Right ventricle myocardium inferior (tissue), 1 donor: ENCODE measurements at regions of chr15 and their contacts with region 1.

Region 1: DNA sequence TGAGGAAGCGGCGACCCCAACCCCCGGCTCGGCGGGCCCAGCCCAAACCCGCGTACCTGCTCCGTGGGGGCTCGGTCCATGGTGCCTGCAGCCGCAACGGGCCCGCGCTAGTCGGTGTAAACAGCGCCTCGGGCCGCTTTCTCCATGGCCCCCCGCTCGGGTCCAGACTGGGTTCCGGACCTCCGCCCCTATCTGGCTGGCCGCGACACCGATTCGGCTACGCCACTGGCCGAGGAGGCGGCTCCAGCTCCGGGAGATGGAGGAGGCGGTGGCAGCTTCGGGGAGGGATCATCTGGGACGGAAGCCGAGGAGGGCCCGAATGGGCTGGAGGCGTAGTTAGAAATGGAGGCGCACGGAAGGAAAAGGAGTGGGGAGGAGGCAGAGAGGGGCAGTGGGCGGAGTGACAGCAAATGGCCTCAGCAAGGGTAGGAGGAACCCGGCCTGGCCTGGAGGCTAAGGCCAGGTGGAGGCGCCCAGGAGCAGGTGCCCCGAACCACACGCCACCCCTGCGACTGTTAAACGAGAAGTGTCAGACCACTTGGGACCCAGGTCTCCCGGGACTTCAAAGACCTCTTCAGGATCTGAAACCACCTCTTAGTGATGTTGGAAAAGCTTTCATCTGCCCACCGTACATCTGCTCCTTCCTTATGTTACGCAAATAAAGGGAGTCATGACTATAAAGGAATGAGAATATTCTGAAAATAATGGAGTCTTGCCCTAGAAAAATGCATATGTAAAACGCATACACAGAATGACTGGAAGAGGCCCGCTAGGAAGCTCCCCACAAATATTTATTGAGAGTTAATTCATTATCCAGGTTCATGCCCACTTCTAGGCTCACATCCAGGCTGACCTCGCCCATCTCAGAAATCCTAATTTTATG is at the start of gene SECISBP2L:
- DNase-seq: peak; percentile 95
- ATAC-seq: peak; percentile 99
- total RNA-seq, gene SECISBP2L: 34.2 TPM

Region 2: DNA sequence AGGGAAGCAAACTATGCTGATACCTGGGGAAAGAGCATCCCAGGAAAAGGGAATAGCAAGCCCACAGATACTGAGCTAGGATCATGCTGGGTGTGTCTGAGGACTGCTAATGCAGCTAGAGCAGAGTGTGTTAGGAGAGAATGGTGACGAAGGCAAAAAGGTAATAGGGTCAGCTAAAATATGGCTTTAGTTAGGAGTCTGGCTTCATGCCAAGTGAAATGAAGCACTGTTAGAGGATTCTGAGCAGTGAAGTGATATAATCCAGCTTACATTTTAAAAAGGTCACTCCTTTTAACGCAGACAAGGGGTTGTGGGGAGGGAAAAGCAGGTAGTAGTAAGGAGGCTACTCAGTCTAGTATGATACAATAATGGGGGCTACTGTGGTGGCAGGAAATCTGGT is 30.6 kb before region 1 on chr15:
- intact Hi-C with region 1: no loop called
- DNase-seq: no peak
- ATAC-seq: no peak

Region 3: DNA sequence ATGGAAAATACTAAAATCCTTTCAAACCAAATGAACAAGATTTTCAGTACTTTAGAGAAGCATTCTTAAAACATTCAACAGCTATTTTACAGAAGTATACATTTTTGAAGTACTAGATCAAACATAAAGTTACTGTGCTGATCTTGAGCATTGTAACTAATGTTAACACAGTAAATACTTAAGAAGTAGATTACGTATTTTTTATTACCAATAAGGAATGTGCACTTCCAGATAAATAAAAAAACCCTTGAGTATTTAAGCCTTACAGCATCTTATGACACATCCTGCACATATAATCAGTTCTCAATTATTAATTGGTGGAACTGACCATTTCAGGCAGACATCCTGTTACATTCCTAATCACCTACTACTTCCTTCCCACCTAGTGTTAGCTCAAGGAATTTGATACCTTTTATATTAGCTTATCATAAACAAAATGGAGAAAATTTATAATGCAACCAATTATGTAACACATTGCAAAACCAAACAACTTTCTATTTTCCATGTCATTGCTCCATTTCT is 76.1 kb after region 1 on chr15:
- intact Hi-C with region 1: loop called (anchors 5 kb)
- DNase-seq: no peak
- ATAC-seq: no peak

Region 4: DNA sequence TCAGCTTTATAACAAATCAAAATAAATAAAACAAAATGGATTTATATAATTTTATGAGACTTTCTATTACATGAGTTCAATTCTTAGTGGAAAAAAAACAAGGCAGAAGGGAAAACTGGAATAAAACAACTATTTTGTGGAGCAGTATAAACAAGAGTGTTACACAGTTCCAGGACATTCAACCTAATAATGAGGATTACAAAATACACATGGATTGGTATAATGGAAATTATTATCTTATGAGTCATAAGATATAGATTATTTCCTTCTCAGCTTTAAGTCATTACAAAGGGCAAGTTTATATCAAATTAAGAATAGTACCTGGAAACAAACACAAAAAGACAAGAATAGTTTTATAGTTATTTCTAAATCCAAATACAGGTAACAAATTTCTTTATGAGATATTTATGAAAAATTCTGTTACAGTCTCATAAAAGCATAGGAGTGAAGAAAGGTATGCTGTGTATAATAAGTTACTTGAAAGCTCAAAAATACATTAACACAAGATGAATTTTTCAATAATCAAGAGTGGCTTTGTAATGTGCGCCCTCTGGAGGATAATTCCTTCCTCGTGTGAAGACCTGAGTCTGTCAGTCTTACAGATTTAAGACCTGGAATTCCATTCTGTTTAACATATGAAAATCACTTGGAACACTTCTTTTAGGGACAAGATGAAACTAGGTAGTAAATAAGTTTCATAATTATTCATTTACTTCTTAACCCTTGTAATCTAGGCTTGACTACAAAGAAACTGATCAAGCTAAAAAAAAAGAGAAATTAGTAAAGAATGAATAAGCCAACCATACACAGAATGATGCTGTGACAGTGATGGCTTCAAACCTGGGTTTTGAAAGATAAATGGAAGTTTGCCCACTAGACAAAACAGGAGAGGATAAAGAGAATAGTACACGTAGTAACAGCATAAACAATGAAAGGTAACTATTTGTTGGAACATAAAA is 99.5 kb after region 1 on chr15:
- intact Hi-C with region 1: loop called (anchors 5 kb)
- DNase-seq: no peak
- ATAC-seq: no peak